GM18951 (cell line): ENCODE measurements at regions of chr10 and their contacts with region 1.

Region 1: DNA sequence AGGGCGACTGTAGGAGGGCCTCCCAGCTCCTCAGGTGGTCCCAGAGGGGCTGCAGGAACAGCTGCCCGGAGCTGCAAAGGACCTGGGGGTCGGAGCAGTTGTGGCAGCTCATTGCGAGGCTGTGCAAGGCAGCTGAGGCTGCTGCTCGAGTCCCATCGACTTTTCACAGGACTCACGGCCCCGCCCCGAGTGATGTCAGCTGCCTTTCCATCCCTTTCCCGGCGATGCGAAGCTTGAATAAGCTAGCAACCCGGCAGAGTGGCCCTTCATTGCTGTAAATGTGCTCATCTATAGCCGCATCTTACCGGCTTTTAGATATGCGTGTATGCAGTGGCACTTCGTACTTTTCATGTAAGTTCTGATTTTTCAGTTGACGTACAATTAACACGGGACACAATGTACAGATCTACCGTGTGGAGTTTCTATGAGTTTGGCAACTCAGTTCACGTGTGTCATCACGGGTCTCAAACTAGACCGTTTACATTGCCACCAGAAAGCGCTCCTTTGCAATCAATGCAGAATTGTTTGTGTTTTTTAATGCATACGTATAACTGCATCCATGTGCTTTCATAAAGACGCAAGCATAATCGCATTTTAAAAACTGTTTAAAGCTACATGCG is at the start of gene CH25H:
- POLR2A ChIP-seq: no peak

Region 2: GRCh38 chr10:89029785-89030437 is 177.4 kb before region 1 on chr10:
- in situ Hi-C with region 1: loop called (anchors 5 kb)
- POLR2A ChIP-seq: no peak